ENCODE measurements at regions of chr4 and their contacts with region 1.

Region 1: DNA sequence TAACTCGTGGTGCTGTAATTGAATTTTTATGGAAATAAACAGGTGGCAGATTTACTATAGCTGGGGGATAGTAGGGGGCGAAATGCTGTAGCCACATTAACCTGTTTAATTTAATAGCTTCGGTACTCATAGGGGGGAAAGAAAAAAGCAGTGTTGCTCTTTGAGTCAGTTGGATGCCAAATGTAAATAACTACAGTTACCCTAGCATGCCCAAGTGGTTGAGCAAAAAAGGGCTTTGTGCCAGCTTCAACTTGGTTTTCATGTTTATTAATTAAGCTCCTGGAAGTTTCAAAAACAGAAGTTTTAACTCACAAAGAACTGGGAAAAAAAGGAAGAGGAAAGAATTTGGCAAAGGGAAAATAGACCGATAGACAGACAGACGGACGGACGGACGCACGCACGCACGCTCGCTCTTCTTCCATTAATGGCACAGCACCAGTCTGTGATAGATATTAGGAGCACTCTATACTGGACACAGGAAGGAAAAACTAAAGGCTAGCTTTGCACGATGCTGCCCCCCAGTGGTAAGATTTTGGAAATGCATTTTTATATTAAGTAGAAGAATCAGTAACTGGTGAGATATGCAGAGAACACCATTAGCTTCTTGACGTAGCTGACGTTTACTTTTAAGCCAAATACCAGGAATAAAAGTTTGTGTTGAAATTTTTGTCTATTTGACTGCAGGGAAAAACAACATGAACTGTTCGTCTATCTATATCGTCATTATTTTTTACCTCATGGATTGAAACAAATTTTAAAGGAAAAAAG is 151.8 kb downstream of the SLC7A11 start:
- DNase-seq: peak; percentile 55
- H3K4me3 Mint-ChIP-seq: no peak overlapping the region
- H3K27ac Mint-ChIP-seq: no peak overlapping the region
- H3K4me1 Mint-ChIP-seq: no peaks in the 10 kb centered on the region
- H3K27me3 Mint-ChIP-seq: no peaks in the 10 kb centered on the region

Region 2: DNA sequence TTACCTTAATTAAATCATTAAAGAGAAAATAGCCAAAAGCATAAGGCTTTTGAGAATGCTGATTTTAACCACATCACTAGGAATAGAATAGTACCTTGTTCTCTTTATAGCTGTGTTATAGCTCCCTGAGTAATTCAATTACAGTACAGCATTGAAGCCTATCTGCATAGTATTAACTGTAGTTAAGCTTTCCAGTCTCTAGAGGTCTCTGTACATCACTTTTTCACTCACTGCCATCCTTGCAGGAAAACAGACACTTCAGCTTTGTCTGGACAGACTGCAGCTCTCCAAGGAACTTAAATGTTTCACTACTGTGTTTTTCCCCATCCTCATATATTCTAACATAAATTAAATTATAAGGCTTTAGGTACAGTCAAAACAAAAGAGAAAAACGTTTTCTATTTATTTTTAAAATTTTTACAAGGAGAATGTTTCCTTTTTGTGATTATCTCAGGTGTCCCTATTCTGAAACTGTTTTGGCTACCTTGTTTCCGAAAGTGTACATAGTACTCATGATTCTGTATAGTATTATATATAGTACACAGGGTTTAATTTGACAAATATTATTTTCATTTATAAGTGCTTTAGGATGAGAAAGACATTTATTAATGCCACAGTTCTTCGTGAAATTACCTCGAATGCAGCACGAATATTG is 965.9 kb before region 1 on chr4:
- CTCF ChIA-PET with region 1: interaction called, 3 read pairs
- intact Hi-C with region 1: loop called (anchors 1 kb)
- DNase-seq: no peak
- H3K4me3 Mint-ChIP-seq: no peak overlapping the region
- H3K27ac Mint-ChIP-seq: no peak overlapping the region
- H3K4me1 Mint-ChIP-seq: no peaks in the 10 kb centered on the region
- H3K27me3 Mint-ChIP-seq: no peaks in the 10 kb centered on the region

Region 3: GRCh38 chr4:137819964-137820383 is 270.4 kb before region 1 on chr4:
- CTCF ChIA-PET with region 1: interaction called, 3 read pairs
- intact Hi-C with region 1: loop called (anchors 1 kb)
- DNase-seq: no peak
- H3K4me3 Mint-ChIP-seq: no peak overlapping the region
- H3K27ac Mint-ChIP-seq: no peak overlapping the region
- H3K4me1 Mint-ChIP-seq: no peaks in the 10 kb centered on the region
- H3K27me3 Mint-ChIP-seq: no peaks in the 10 kb centered on the region

Region 4: GRCh38 chr4:138035781-138036258 is 54.5 kb before region 1 on chr4:
- CTCF ChIA-PET with region 1: interaction called, 4 read pairs
- intact Hi-C with region 1: loop called (anchors 1 kb)
- DNase-seq: no peak
- H3K4me3 Mint-ChIP-seq: no peak overlapping the region
- H3K27ac Mint-ChIP-seq: no peak overlapping the region
- H3K4me1 Mint-ChIP-seq: no peaks in the 10 kb centered on the region
- H3K27me3 Mint-ChIP-seq: no peaks in the 10 kb centered on the region

Measured in activated naive CD4-positive, alpha-beta T cell treated with anti-CD3 and anti-CD28 coated beads for 36 hours (primary cell).